AG04450 (cell line): ENCODE measurements at regions of chr10 and their contacts with region 1.

Region 1: GRCh38 chr10:119650692-119651513 is at the start of gene BAG3:
- DNase-seq: peak; percentile 86
- H3K4me3 ChIP-seq: peak within 1 kb of the TSS; percentile 92
- H3K27ac ChIP-seq: peak within 1 kb of the TSS; percentile 83
- H3K27me3 ChIP-seq: no peaks in the 10 kb centered on the region
- CTCF ChIP-seq: no peak
- polyA plus RNA-seq, gene BAG3: 12.7 and 20.1 TPM in 2 replicates

Region 2: DNA sequence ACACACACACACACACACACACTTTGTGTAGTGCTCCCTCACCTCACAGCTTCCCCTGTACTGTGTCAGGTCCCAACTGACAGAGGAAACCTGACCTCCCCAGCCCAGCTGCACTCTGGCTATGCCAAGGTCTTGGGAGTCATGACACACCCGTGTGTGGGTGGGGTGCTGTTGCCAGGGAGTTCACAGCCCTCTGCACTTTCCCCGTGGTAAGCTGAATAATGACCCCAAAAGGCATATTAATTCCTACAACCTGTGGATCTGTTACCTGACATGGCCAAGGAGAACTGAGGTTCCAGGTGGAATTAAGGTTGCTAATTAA is 630.3 kb before region 1 on chr10:
- CTCF ChIA-PET with region 1: no interaction called
- POLR2A ChIA-PET with region 1: no interaction called
- DNase-seq: no peak
- H3K4me3 ChIP-seq: no peak overlapping the region
- H3K27ac ChIP-seq: no peak overlapping the region
- H3K27me3 ChIP-seq: peaks cover 12% of the 10 kb centered on the region
- CTCF ChIP-seq: no peak

Region 3: DNA sequence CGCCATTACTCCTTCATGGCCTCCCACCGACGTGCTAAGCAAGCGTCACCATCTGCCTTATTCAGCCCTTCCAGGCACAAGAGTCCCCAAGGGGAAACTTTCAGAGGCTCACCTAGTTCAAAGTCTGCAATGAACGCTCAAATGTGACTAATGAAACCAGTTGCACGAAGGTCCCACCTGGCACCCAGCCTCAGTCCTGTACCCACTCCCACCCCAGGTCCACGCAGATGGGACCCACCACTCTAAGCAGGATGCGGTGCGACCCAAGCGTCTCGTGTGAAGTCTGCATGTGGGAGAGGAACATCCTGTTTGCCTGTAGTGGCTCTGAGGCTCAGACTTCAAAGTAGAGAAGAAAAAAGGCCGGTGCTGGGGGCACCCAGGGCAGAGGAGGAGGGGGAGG is 148.7 kb before region 1 on chr10:
- CTCF ChIA-PET with region 1: no interaction called
- POLR2A ChIA-PET with region 1: no interaction called
- DNase-seq: no peak
- H3K4me3 ChIP-seq: no peak overlapping the region
- H3K27ac ChIP-seq: no peak overlapping the region
- H3K27me3 ChIP-seq: no peaks in the 10 kb centered on the region
- CTCF ChIP-seq: no peak

Region 4: GRCh38 chr10:119596537-119597404 is 54.1 kb before region 1 on chr10 and contains the start of gene TIAL1:
- CTCF ChIA-PET with region 1: interaction called, 4 read pairs
- POLR2A ChIA-PET with region 1: interaction called, 10 read pairs
- DNase-seq: peak; percentile 99
- H3K4me3 ChIP-seq: peak within 1 kb of the TSS; percentile 97
- H3K27ac ChIP-seq: peak within 1 kb of the TSS; percentile 99
- H3K27me3 ChIP-seq: no peaks in the 10 kb centered on the region
- CTCF ChIP-seq: no peak
- polyA plus RNA-seq, gene TIAL1: 86.0 and 113 TPM in 2 replicates

Region 5: GRCh38 chr10:119667562-119668328 is 16.8 kb after region 1 on chr10:
- CTCF ChIA-PET with region 1: interaction called, 3 read pairs
- POLR2A ChIA-PET with region 1: interaction called, 11 read pairs
- DNase-seq: peak; percentile 87
- H3K4me3 ChIP-seq: peak overlapping the region; percentile 22; the same call in 1 of the 2 replicates
- H3K27ac ChIP-seq: peak overlapping the region; percentile 97
- H3K27me3 ChIP-seq: no peaks in the 10 kb centered on the region
- CTCF ChIP-seq: peak; percentile 11; the same call in 1 of the 2 replicates